ENCODE measurements at regions of chr15 and their contacts with region 1.

Region 1: GRCh38 chr15:99565299-99566156 is at the start of gene MEF2A:
- DNase-seq: peak; percentile 86 to 94 (median 91)
- ATAC-seq: peak; percentile 86
- H3K4me3 ChIP-seq: peak within 1 kb of the TSS; percentile 100
- H3K4me3 Mint-ChIP-seq: peak within 1 kb of the TSS; percentile 96 to 100 (median 98)
- H3K27ac ChIP-seq: peak within 1 kb of the TSS; percentile 81
- H3K27ac Mint-ChIP-seq: peak within 1 kb of the TSS; percentile 93 to 99 (median 97)
- H3K4me1 ChIP-seq: peaks cover 8 to 24% of the 10 kb centered on the region in 2 donors
- H3K4me1 Mint-ChIP-seq: peaks cover 32 to 62% (median 55%) of the 10 kb centered on the region in 7 donors
- H3K27me3 ChIP-seq: no peaks in the 10 kb centered on the region
- H3K27me3 Mint-ChIP-seq: peaks cover 0 to 5% (median 0%) of the 10 kb centered on the region in 5 donors
- total RNA-seq, gene MEF2A: 24.2 to 42.8 (median 38.5) TPM

Region 2: DNA sequence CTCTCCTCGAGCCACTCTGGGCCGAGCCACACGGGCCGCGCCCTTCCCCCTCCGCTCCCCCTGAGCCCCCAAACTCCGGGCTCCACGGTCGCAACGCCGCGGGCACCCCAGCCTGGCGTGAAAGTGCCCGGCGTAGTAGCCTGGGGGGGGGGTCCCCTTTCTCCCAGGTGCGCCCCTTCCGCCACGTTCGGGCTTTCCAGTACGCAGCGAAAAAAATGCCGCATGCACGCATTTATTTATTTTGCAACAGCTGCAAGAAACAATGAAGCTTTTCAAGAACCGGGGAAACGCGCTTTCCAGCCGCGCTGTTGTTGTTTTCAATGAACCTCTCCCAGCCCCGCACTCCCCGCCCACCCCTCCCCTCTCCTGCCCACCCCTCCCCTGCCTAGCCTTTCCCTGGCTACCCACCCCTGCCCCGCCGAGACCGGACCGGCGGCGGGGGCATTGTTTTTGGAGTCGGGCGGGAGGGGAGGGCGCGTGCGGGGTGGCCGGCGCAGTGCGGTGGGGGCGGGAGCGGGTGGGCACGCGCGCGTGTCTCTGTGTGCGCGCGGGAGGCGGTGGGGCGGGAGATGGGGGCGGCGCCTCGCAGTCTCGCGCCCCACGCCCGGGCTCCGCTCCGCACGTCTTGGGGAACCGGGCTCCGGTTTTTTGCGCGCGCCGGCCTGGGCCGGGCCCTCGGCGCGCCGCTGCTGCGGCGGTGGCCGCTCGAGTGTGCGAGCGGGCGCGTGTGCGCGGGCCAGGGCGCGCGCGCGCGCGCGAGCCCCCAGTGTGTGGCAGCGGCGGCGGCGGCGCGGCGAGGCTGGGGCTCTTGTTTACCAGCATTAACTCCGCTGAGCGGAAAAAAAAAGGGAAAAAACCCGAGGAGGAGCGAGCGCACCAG is 917.5 kb before region 1 on chr15 and contains the start of gene IGF1R:
- CTCF ChIA-PET with region 1: no interaction called
- POLR2A ChIA-PET with region 1: no interaction called
- intact Hi-C with region 1: loop called (anchors 5 to 10 kb)
- DNase-seq: peak; percentile 87 to 98 (median 94)
- ATAC-seq: peak; percentile 86
- H3K4me3 ChIP-seq: peak within 1 kb of the TSS; percentile 74
- H3K4me3 Mint-ChIP-seq: peak within 1 kb of the TSS; percentile 83 to 98 (median 92)
- H3K27ac ChIP-seq: peak within 1 kb of the TSS; percentile 82
- H3K27ac Mint-ChIP-seq: peak within 1 kb of the TSS; percentile 89 to 97 (median 93)
- H3K4me1 ChIP-seq: peaks cover 0 to 11% of the 10 kb centered on the region in 2 donors
- H3K4me1 Mint-ChIP-seq: peaks cover 14 to 41% (median 29%) of the 10 kb centered on the region in 7 donors
- H3K27me3 ChIP-seq: peaks cover 0 to 16% of the 10 kb centered on the region in 2 donors
- H3K27me3 Mint-ChIP-seq: peaks cover 0 to 58% (median 0%) of the 10 kb centered on the region in 5 donors
- total RNA-seq, gene IGF1R: 37.4 to 167 (median 124) TPM

Region 3: DNA sequence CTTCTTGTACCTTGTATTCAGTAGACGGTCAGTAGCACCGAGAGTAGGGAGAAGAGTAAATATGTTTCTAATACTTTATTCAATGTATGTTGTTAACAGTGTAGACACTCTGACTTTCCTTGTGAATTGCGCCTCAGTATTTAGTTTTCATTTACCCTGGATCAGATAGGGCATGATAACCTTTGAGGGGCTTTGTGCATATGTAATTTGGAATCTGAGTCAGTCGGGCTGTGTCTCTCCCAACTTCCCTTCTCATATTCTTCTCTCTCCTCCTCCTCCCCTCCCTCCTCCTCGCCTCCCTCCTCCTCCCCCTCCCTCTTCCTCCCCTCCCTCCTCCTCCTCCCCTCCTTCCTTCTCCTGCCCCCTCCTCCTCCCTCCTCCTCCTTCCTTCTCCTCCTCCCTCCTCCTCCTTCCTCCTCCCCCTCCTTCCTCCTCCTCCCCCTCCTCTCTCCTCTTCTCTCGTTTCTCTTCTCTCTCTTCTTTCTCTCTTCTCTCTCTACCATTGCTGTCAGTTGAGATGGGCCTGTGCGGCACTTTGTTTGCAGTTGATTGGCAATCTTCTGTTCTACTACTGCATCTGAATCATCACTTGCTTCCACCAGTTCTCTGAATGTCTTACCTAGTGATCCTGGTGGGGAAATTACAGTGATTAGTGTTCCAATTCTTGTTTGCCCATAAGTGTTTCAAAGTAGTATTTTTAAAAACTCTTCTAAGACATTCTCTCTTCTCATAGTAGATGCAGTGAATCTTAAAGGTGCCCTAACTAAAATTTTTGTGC is 720.2 kb before region 1 on chr15:
- CTCF ChIA-PET with region 1: no interaction called
- POLR2A ChIA-PET with region 1: no interaction called
- intact Hi-C with region 1: no loop called
- DNase-seq: no peak
- ATAC-seq: no peak
- H3K4me3 ChIP-seq: no peak overlapping the region
- H3K4me3 Mint-ChIP-seq: peak overlapping the region in 2 of 10 donors; percentile 6 to 48
- H3K27ac ChIP-seq: no peak overlapping the region
- H3K27ac Mint-ChIP-seq: peak overlapping the region in 6 of 9 donors; percentile 20 to 89 (median 48)
- H3K4me1 ChIP-seq: peaks cover 0 to 3% of the 10 kb centered on the region in 2 donors
- H3K4me1 Mint-ChIP-seq: peaks cover 11 to 86% (median 72%) of the 10 kb centered on the region in 7 donors
- H3K27me3 ChIP-seq: no peaks in the 10 kb centered on the region
- H3K27me3 Mint-ChIP-seq: no peaks in the 10 kb centered on the region

Region 4: DNA sequence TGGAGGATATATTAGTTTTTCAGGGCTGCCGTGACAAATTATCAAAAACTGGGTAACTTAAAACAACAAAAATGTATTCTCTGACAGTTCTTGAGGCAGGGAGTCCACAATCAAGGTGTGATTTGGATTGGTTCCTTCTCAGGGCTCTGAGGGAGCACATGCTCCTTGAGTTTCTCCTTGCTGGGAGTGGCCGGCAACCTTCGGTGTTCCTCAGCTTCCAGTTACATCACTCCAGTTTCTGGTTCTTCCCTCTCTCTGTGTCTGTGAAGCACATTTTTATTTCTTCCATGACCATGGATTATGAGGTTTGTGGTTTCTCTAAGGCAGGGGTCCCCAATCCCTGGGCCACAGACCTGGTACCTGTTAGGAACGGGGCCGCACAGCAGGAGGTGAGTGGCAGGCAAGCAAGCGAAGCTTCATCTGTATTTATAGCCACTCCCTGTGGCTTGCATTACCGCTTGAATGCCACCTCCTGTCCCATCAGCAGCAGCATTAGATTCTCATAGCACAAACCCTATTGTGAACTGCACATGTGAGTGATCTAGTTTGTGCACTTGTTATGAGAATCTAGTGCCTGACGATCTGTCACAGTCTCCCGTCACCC is 289.9 kb before region 1 on chr15:
- CTCF ChIA-PET with region 1: no interaction called
- POLR2A ChIA-PET with region 1: no interaction called
- intact Hi-C with region 1: loop called in 1 of 2 experiments (anchors 5 kb)
- DNase-seq: no peak
- ATAC-seq: no peak
- H3K4me3 ChIP-seq: no peak overlapping the region
- H3K4me3 Mint-ChIP-seq: no peak overlapping the region
- H3K27ac ChIP-seq: no peak overlapping the region
- H3K27ac Mint-ChIP-seq: peak overlapping the region in 1 of 9 donors; percentile 59
- H3K4me1 ChIP-seq: no peaks in the 10 kb centered on the region
- H3K4me1 Mint-ChIP-seq: peaks cover 7 to 35% (median 19%) of the 10 kb centered on the region in 7 donors
- H3K27me3 ChIP-seq: no peaks in the 10 kb centered on the region
- H3K27me3 Mint-ChIP-seq: no peaks in the 10 kb centered on the region

Region 5: GRCh38 chr15:99442252-99442897 is 123.2 kb before region 1 on chr15:
- CTCF ChIA-PET with region 1: no interaction called
- POLR2A ChIA-PET with region 1: interaction called, 6 read pairs
- intact Hi-C with region 1: loop called in 1 of 2 experiments (anchors 2 kb)
- DNase-seq: peak in 3 of 9 donors; percentile 22 to 44 (median 23)
- ATAC-seq: no peak
- H3K4me3 ChIP-seq: no peak overlapping the region
- H3K4me3 Mint-ChIP-seq: peak overlapping the region in 6 of 10 donors; percentile 8 to 30 (median 20)
- H3K27ac ChIP-seq: no peak overlapping the region
- H3K27ac Mint-ChIP-seq: peak overlapping the region; percentile 30 to 100 (median 90)
- H3K4me1 ChIP-seq: peaks cover 0 to 57% of the 10 kb centered on the region in 2 donors
- H3K4me1 Mint-ChIP-seq: peaks cover 10 to 87% (median 65%) of the 10 kb centered on the region in 7 donors
- H3K27me3 ChIP-seq: no peaks in the 10 kb centered on the region
- H3K27me3 Mint-ChIP-seq: peaks cover 0 to 8% (median 0%) of the 10 kb centered on the region in 5 donors

Region 6: DNA sequence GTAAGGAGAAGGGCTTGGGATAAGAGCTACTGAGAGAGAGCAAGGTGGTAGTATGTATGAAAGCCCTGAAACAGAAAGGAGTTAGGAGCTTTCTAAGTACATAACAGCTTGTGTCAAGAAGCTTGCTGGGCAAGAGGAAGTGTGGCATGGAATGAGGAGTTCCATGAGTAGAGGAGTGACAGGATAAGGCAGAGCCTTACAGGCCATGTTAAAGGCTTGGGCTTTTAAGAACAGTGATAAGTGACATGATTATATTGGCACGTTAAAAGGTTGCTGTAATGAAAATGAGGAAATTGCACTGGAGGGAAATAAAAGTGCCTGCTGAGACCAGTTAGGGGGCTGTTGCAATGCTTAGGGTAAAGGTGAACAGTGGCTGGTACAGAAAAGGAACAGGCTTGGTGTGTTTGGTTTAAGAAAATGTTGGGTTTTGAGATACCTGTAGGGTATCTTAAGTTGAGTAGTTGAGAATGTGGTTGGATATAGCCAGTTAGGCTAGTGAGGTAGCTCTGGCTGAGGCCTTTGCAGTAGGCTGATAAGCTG is 49.3 kb after region 1 on chr15:
- CTCF ChIA-PET with region 1: interaction called, 3 read pairs
- POLR2A ChIA-PET with region 1: no interaction called
- intact Hi-C with region 1: loop called in 1 of 2 experiments (anchors 5 kb)
- DNase-seq: no peak
- ATAC-seq: peak; percentile 51
- H3K4me3 ChIP-seq: no peak overlapping the region
- H3K4me3 Mint-ChIP-seq: peak overlapping the region in 3 of 10 donors; percentile 10 to 19 (median 12)
- H3K27ac ChIP-seq: no peak overlapping the region
- H3K27ac Mint-ChIP-seq: peak overlapping the region; percentile 21 to 69 (median 58)
- H3K4me1 ChIP-seq: peaks cover 4 to 14% of the 10 kb centered on the region in 2 donors
- H3K4me1 Mint-ChIP-seq: peaks cover 23 to 85% (median 77%) of the 10 kb centered on the region in 7 donors
- H3K27me3 ChIP-seq: no peaks in the 10 kb centered on the region
- H3K27me3 Mint-ChIP-seq: no peaks in the 10 kb centered on the region

Region 7: GRCh38 chr15:99733268-99734039 is 167.9 kb after region 1 on chr15 and contains the start of gene LYSMD4:
- CTCF ChIA-PET with region 1: interaction called, 3 read pairs
- POLR2A ChIA-PET with region 1: interaction called, 8 read pairs
- intact Hi-C with region 1: loop called (anchors 1 kb)
- DNase-seq: peak; percentile 93 to 98 (median 96)
- ATAC-seq: peak; percentile 100
- H3K4me3 ChIP-seq: peak within 1 kb of the TSS; percentile 70
- H3K4me3 Mint-ChIP-seq: peak within 1 kb of the TSS; percentile 81 to 92 (median 88)
- H3K27ac ChIP-seq: peak within 1 kb of the TSS; percentile 84
- H3K27ac Mint-ChIP-seq: peak within 1 kb of the TSS; percentile 82 to 97 (median 95)
- H3K4me1 ChIP-seq: peaks cover 10 to 13% of the 10 kb centered on the region in 2 donors
- H3K4me1 Mint-ChIP-seq: peaks cover 5 to 36% (median 27%) of the 10 kb centered on the region in 7 donors
- H3K27me3 ChIP-seq: no peaks in the 10 kb centered on the region
- H3K27me3 Mint-ChIP-seq: no peaks in the 10 kb centered on the region
- total RNA-seq, gene LYSMD4: 7.9 to 22.4 (median 15.4) TPM